PC-9 (cell line): ENCODE measurements at regions of chr4 and their contacts with region 1.

Region 1: GRCh38 chr4:165332502-165332901 is 5.0 kb downstream of the MSMO1 start:
- DNase-seq: no peak
- H3K4me3 ChIP-seq: 0 out of 2 replicates have a peak overlapping the region, but pooled peaks have one; percentile 24
- H3K27ac ChIP-seq: no peak overlapping the region
- H3K4me1 ChIP-seq: peaks cover 32% of the 10 kb centered on the region
- H3K27me3 ChIP-seq: no peaks in the 10 kb centered on the region
- CTCF ChIP-seq: no peak

Region 2: DNA sequence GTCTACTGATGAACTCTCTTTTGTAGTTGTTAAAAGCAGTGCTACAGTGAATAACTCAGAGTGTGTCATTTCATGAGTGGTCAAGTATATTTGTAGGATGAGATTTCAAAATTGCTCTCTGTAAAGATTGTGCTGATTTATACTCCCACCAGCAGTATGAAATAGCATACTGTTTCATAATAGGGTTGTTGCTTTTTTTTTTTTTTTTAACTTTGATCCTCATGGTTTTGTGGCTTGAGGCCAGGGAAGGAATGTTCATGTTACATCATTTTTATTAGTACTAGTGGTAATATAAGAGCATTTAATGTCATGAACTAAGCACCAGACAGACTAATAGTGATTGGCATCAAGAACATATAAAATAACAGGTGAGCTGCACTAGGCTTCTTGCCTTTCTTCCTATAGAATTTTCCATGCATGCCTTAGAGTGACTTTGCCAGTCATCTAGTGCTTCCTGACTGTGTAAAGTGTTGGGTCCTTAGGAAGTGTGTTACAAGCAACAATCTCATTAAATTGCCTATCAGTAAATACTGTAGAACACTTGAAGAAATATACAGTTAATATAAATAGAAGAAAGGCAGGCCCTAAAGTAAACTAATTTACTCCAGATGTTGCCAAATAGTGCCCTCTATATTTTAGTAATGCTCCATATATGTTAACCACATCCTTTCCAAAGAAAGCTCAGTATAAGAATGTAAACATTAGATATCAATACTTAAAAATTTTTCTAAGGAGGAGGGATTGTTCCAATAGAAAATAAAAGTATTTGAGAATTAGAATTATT is 43.7 kb before region 1 on chr4:
- CTCF ChIA-PET with region 1: no interaction called
- POLR2A ChIA-PET with region 1: interaction called, 10 read pairs
- intact Hi-C with region 1: no loop called
- DNase-seq: peak in 1 of 2 experiments; percentile 45
- H3K4me3 ChIP-seq: no peak overlapping the region
- H3K27ac ChIP-seq: peak overlapping the region; percentile 46
- H3K4me1 ChIP-seq: peaks cover 14% of the 10 kb centered on the region
- H3K27me3 ChIP-seq: no peaks in the 10 kb centered on the region
- CTCF ChIP-seq: no peak

Region 3: DNA sequence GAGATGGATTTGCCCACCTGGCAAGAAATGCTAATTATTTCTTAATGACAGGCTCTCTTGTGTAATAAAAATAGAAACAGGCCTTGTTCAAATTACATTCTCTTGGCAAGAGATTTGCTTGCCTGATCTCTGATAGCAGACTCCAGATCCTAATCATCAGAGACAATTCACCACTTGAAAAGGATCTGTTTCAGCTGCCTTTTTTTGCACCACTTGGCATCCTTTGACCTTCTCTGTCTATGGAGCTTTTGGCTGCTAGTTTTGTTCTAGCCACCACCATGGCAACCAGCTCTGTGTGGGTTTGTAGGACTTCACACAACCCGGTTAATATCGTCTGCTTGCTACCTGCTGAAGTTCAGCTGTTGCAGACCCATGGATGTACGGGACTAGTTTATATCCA is 299.4 kb after region 1 on chr4:
- CTCF ChIA-PET with region 1: no interaction called
- POLR2A ChIA-PET with region 1: no interaction called
- intact Hi-C with region 1: no loop called
- DNase-seq: no peak
- H3K4me3 ChIP-seq: no peak overlapping the region
- H3K27ac ChIP-seq: no peak overlapping the region
- H3K4me1 ChIP-seq: no peaks in the 10 kb centered on the region
- H3K27me3 ChIP-seq: no peaks in the 10 kb centered on the region
- CTCF ChIP-seq: no peak